PC-9 (cell line): ENCODE measurements at regions of chr13 and their contacts with region 1.

Region 1: DNA sequence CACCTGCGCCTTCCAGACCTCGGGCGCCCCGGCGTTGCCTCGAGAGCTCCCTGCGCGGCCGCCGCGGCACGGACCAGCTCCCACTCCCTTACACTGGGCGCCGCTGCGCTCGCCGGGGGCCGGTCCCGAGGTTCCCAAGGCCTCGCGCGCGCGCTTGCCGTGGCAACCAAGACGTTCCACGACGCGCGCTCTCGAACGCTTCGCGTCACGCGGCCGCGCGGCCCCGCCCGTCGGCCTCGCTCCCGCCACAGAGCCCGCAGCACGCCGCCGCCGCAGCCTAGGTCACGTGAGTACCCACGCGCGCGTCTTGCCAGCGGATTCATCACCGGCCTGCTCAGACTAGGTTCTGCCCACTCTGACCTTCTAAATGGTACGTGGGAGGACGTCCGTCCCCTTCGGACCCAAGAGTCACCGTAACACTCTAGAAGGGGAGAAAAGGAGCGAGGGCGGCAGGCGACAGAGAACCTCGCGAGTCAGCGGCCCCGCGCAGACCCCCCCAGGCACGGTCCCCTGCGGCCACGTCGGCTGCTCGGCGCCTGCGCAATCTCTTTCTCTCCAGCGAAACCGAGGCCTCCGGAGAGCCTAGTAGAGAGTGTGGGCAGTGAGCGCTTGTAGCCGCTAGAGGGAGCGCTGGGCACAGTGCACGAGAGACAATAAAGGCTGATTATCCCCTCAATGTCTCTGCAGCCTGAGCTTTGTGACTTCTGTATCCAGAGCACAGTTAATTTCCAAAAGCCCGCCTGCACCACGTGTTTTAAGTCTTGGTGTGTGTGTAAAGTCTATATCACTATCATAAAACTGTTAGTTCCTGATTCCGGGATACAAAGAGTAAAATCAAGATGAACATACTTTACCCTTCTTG is at the start of gene SPART:
- DNase-seq: peak; percentile 66 to 79
- H3K4me3 ChIP-seq: peak within 1 kb of the TSS; percentile 92
- H3K27ac ChIP-seq: peak within 1 kb of the TSS; percentile 98
- H3K4me1 ChIP-seq: peaks cover 31% of the 10 kb centered on the region
- H3K27me3 ChIP-seq: no peaks in the 10 kb centered on the region
- CTCF ChIP-seq: peak; percentile 96
- total RNA-seq, gene SPART: 36.2 and 51.4 TPM in 2 replicates

Region 2: DNA sequence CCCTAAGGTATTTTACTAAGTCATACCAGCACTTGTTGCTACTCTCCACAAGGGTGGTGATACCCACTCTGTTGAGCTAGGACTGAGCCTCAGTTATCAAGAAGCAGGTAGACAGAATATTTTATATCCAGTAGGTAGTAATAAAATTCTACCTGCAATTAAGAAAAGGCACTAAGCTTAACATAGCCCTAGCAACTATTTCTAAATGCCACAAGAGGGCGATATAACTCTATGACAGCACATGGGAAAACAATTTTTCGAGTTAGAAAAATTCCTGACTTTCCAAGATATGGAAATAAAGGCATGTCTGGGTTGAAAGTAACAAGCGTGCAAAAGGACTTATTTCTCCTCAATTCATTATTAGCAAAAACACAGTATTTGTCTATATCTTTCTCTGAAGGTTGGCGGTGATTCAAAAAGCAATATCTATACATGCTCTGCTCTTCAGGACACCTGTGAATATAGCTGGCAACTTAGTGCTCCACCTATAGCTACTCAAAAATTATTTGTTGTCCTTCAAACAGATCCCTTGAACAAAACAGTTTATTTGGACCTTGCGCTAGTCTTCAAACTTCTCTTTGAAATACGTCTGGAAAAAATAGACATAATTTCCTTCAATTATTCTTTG is 63.5 kb before region 1 on chr13:
- CTCF ChIA-PET with region 1: no interaction called
- POLR2A ChIA-PET with region 1: no interaction called
- intact Hi-C with region 1: loop called (anchors 1 kb)
- DNase-seq: peak in 1 of 2 experiments; percentile 38
- H3K4me3 ChIP-seq: no peak overlapping the region
- H3K27ac ChIP-seq: no peak overlapping the region
- H3K4me1 ChIP-seq: no peaks in the 10 kb centered on the region
- H3K27me3 ChIP-seq: no peaks in the 10 kb centered on the region
- CTCF ChIP-seq: peak; percentile 93

Region 3: DNA sequence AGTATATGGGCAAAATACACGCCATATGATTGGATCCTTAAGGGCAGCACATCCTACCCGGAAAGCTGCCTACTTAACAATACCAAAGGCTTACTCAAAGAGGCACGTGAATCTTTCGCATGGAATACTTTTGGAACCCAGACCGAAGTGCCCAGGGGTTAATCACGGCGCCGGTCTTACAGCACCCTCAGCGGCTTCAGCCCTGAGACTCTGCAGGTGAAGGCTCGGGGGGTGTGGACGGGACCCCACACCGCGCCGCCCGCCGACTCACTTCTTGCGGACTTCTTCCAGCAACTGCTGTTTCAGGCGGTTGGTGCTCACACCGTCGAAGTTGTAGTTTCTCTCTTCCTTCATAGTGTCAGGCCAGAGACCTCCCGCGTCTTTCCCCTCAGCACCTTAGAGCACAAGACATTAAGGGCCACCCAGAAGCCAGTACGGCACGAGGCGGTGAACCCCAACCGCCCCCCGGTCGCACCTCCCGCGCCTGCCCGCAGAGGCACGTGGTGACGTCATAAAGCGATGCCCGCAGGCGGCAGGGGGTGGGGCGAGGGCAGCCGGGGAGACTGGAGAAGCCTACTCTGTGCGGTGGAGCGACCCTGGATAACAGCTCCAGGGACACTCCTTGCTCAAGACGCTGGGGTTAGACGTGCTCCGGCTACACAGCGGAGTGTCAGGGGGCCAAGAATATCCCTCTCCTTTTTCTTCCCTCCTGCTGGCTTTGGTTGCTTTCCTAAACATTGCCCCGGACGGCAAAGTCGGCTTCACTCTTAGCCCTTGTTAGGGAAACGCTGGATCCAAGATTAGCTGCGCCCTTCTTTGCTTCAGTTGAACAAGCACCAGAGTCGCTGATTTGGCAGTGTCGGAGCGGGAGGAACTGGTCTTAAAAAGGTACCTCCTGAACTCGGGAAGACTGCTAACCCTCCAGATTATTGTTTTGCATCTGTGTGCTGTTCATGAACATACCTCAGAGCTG is 48.8 kb before region 1 on chr13 and contains the start of gene CCDC169:
- CTCF ChIA-PET with region 1: no interaction called
- POLR2A ChIA-PET with region 1: interaction called, 3 read pairs
- intact Hi-C with region 1: loop called (anchors 5 kb)
- DNase-seq: peak; percentile 64 to 83
- H3K4me3 ChIP-seq: peak within 1 kb of the TSS; percentile 61
- H3K27ac ChIP-seq: peak within 1 kb of the TSS; percentile 82
- H3K4me1 ChIP-seq: peaks cover 34% of the 10 kb centered on the region
- H3K27me3 ChIP-seq: no peaks in the 10 kb centered on the region
- CTCF ChIP-seq: no peak
- total RNA-seq, gene CCDC169: 6.5 and 6.9 TPM in 2 replicates

Region 4: DNA sequence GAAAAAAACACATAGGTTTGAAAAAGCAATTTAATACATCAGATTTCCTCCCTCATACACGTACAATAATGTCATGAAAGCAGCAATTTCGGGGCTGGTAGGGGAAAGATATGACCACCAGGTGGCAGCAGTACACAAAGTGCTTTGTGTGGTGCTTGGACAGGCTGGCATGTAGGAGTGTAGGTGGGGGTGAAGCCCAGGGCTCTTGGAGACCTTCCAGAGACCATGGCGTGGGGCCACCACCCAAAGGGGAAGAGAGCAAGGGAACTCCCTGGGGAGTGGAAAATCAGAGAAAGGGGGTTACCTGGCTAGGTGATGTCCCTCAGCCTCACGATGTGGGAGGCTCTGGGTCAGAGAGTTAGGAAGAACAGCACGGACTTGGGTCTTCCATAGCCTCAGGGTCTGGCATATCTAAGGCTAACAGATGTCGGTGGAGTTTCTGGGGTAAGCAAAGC is 74.0 kb after region 1 on chr13:
- CTCF ChIA-PET with region 1: no interaction called
- POLR2A ChIA-PET with region 1: no interaction called
- intact Hi-C with region 1: loop called (anchors 2 kb)
- DNase-seq: peak; percentile 52 to 63
- H3K4me3 ChIP-seq: no peak overlapping the region
- H3K27ac ChIP-seq: no peak overlapping the region
- H3K4me1 ChIP-seq: peaks cover 40% of the 10 kb centered on the region
- H3K27me3 ChIP-seq: no peaks in the 10 kb centered on the region
- CTCF ChIP-seq: peak; percentile 89

Region 5: DNA sequence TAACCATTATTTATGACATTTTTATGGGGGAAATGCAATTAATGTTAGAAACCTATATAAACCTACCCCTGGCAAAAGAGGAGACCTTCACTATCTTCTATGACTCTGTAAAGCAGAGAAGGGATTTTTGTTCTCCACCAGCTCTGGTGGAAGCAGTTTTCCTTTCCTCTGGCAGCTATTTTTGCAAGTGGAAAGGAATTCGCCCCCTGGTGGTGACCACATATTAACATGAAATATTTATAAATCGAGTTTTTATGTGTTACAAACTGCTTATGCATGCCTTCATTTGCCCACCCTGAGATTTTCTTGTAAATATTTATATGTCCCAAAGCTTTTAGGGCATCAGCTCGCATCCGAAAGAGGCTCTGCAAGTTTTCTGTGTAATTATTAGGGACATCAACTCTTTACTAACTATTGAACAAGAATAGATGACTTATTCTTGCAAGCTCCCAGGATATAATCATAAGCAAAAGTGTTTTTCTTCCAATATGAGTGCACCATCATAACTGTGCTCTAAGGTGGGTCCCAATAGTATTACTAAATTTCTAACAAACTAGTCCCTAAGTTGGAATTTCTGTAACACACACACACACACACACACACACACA is 389.8 kb after region 1 on chr13:
- CTCF ChIA-PET with region 1: no interaction called
- POLR2A ChIA-PET with region 1: no interaction called
- intact Hi-C with region 1: loop called (anchors 2 kb)
- DNase-seq: peak in 1 of 2 experiments; percentile 11
- H3K4me3 ChIP-seq: no peak overlapping the region
- H3K27ac ChIP-seq: no peak overlapping the region
- H3K4me1 ChIP-seq: 0 out of 2 replicates have a peak, but pooled peaks cover 5% of the 10 kb centered on the region
- H3K27me3 ChIP-seq: no peaks in the 10 kb centered on the region
- CTCF ChIP-seq: peak; percentile 91

Region 6: DNA sequence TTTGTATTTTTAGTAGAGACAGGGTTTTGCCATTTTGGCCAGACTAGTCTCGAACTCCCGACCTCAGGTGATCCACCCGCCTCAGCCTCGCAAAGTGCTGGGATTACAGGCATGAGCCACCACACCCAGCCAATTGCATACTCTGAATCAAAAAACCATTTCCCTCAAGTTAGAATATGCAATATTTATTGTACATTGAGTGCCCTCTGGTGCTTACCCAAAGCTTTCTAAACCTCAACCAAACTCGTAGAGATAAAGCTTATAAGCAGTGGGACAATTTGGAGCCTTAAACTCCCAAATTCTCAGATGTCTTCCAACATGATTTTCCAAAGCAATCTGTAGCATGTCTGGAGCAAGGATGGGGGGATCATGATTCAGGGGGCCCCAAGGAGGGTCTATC is 494.9 kb after region 1 on chr13:
- CTCF ChIA-PET with region 1: no interaction called
- POLR2A ChIA-PET with region 1: no interaction called
- intact Hi-C with region 1: loop called (anchors 2 kb)
- DNase-seq: no peak
- H3K4me3 ChIP-seq: no peak overlapping the region
- H3K27ac ChIP-seq: no peak overlapping the region
- H3K4me1 ChIP-seq: no peaks in the 10 kb centered on the region
- H3K27me3 ChIP-seq: no peaks in the 10 kb centered on the region
- CTCF ChIP-seq: 0 out of 2 replicates have a peak, but pooled peaks have one; percentile 21

Region 7: GRCh38 chr13:36981156-36981743 is 634.8 kb after region 1 on chr13:
- CTCF ChIA-PET with region 1: no interaction called
- POLR2A ChIA-PET with region 1: no interaction called
- intact Hi-C with region 1: loop called (anchors 5 kb)
- DNase-seq: no peak
- H3K4me3 ChIP-seq: no peak overlapping the region
- H3K27ac ChIP-seq: no peak overlapping the region
- H3K4me1 ChIP-seq: no peaks in the 10 kb centered on the region
- H3K27me3 ChIP-seq: no peaks in the 10 kb centered on the region
- CTCF ChIP-seq: peak; percentile 74